CD4-positive, alpha-beta T cell (primary cell): ENCODE measurements at regions of chr11 and their contacts with region 1.

Region 1: GRCh38 chr11:118752654-118753053 is 38.3 kb downstream of the DDX6 start:
- DNase-seq: no peak
- ATAC-seq: no peak
- H3K4me3 ChIP-seq: no peak overlapping the region
- H3K4me3 Mint-ChIP-seq: no peak overlapping the region
- H3K27ac ChIP-seq: no peak overlapping the region
- H3K27ac Mint-ChIP-seq: peak overlapping the region; percentile 57
- H3K4me1 ChIP-seq: no peaks in the 10 kb centered on the region
- H3K4me1 Mint-ChIP-seq: peaks cover 13% of the 10 kb centered on the region
- H3K27me3 ChIP-seq: no peaks in the 10 kb centered on the region
- H3K27me3 Mint-ChIP-seq: no peaks in the 10 kb centered on the region
- CTCF ChIP-seq: no peak

Region 2: DNA sequence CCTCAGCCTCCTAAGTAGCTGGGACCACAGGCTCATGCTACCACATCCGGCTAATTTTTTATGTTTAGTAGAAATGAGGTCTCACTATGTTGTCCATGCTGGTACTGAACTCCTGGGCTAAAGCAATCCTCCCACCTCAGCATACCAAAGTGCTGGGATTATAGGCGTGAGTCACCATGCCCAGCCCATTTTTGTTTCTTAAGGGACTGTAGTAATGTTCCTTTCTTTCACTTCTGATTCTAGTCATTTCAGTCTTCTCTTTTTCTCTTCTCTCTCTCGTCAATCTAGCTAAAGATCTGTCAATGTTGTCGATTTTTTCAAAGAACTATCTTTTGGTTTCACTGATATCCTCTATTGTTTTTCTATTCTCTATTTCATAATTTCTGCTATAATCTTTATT is 1804.3 kb before region 1 on chr11:
- CTCF ChIA-PET with region 1: no interaction called
- POLR2A ChIA-PET with region 1: no interaction called
- intact Hi-C with region 1: no loop called
- DNase-seq: peak in 1 of 14 experiments; percentile 38
- ATAC-seq: no peak
- H3K4me3 ChIP-seq: no peak overlapping the region
- H3K4me3 Mint-ChIP-seq: no peak overlapping the region
- H3K27ac ChIP-seq: no peak overlapping the region
- H3K27ac Mint-ChIP-seq: no peak overlapping the region
- H3K4me1 ChIP-seq: no peaks in the 10 kb centered on the region
- H3K4me1 Mint-ChIP-seq: peaks cover 30% of the 10 kb centered on the region
- H3K27me3 ChIP-seq: no peaks in the 10 kb centered on the region
- H3K27me3 Mint-ChIP-seq: no peaks in the 10 kb centered on the region
- CTCF ChIP-seq: no peak

Region 3: DNA sequence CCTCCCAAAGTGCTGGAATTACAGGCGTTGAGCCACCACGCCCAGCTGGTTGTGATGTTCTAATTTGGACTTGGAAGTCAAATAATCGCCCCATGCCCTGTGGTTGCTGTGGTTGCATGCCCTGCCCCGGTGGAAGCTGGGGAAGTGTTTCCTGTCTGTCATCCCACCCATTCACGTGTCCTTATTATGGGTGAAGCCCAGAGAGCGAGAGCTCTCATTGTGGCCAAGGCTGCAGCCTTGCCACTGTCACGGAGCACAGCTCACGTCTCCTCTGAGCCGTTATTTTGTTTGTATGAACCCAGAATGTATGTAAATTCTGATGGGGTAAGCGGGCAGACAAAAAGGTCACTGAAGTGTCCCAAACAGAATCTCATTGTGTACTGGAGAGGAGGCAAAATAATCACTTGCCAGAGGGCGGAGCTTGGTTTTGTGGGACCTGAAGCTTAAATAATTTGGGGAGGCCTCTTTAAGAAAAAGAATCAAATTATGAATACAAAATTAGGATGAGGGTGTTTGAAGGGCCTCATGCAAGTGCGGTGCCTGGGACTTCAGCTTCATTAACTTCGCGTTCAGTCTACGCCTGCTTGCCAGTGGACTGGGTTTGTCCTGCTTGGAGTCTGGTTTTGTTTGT is 47.4 kb before region 1 on chr11:
- CTCF ChIA-PET with region 1: no interaction called
- POLR2A ChIA-PET with region 1: interaction called, 11 read pairs
- intact Hi-C with region 1: no loop called
- DNase-seq: peak in 13 of 14 experiments; percentile 26 to 87 (median 45)
- ATAC-seq: peak; percentile 74
- H3K4me3 ChIP-seq: no peak overlapping the region
- H3K4me3 Mint-ChIP-seq: peak overlapping the region; percentile 84
- H3K27ac ChIP-seq: peak overlapping the region; percentile 14 to 60
- H3K27ac Mint-ChIP-seq: peak overlapping the region; percentile 92
- H3K4me1 ChIP-seq: peaks cover 42% of the 10 kb centered on the region
- H3K4me1 Mint-ChIP-seq: peaks cover 42% of the 10 kb centered on the region
- H3K27me3 ChIP-seq: no peaks in the 10 kb centered on the region
- H3K27me3 Mint-ChIP-seq: no peaks in the 10 kb centered on the region
- CTCF ChIP-seq: no peak